K562 (cell line): ENCODE measurements at regions of chr9 and their contacts with region 1.

Region 1: DNA sequence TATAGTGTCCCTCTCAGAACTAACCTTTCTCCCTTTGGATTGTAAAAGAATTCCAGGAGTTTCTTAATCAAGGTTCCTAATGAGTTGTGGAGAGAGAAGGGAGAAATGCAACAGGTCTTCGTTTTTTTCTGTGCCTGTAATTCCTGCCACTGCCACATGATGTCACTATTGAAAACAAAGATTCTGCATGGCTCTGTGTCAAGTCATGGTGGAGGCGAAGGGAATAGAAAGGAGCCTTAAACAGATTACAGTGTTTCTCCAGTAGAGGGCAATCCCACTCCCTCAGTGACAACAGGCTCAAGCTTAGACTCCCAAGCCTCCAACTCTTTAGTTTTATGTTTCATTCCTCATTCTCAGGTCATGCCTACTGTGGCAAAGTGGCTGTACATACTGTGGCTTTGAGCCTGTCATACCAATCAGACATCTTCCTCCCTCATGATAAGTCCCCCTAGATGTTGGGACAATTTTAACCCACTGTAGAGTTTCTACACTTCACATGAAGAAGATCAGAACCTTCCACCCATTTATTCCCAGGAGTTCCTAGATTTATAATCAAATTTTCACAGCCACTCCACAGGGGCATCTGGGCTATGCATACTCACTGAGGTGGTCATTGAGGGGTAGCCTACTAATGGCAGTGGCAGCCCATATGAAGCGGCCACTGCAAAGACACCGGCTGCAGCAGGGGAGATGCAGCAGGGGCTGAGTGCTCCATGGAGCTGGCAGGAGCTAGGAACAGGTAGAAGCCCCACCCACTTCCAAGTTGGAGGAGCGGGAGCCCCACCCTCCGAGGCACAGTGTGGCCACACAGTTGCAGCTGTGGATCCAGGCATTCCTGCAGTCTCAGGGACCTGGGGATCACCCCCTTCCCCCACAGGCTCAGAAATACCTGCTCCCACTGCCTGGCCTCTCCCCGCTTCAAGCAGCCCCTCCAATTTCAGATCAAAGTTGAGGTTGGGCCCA is 97.4 kb upstream of the TRIM32 start:
- DNase-seq: peak; percentile 72 to 76 (median 73)
- ATAC-seq: peak; percentile 100
- H3K4me3 ChIP-seq: no peak overlapping the region
- H3K27ac ChIP-seq: no peak overlapping the region
- H3K4me1 ChIP-seq: no peaks in the 10 kb centered on the region
- H3K27me3 ChIP-seq: no peaks in the 10 kb centered on the region
- CTCF ChIP-seq: peak; percentile 89 to 98 (median 95)
- EP300 ChIP-seq: no peak; the same call in 1 of the 2 replicates
- POLR2A ChIP-seq: no peak
- RAD21 ChIP-seq: peak; percentile 48 to 82

Region 2: DNA sequence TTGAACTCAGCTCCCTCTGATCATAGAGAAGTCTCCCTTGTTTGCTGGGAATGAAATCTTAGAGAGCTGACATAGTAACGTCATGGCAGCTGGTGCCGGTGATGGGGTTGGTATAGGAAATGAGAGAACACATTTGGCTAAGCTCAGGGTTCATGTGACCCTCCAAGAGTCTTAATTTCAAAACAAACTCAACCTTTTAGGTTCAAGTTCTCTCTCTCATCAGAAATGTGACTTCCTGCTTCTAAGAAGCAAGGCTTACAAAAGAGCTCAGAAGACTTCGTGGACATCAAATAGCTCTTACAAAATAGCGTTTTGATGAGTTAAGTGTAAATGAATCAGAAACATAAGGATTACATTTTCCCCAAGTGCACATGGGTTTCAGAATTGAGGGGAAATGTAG is 338.8 kb before region 1 on chr9:
- CTCF ChIA-PET with region 1: no interaction called
- POLR2A ChIA-PET with region 1: no interaction called
- in situ Hi-C with region 1: no loop called
- intact Hi-C with region 1: no loop called
- DNase-seq: no peak
- ATAC-seq: no peak
- H3K4me3 ChIP-seq: no peak overlapping the region
- H3K27ac ChIP-seq: no peak overlapping the region
- H3K4me1 ChIP-seq: no peaks in the 10 kb centered on the region
- H3K27me3 ChIP-seq: no peaks in the 10 kb centered on the region
- CTCF ChIP-seq: no peak
- EP300 ChIP-seq: no peak
- POLR2A ChIP-seq: no peak
- RAD21 ChIP-seq: no peak

Region 3: GRCh38 chr9:116646661-116647512 is 57.2 kb after region 1 on chr9:
- CTCF ChIA-PET with region 1: no interaction called
- POLR2A ChIA-PET with region 1: no interaction called
- in situ Hi-C with region 1: no loop called
- intact Hi-C with region 1: loop called (anchors 1 kb)
- DNase-seq: peak in 3 of 4 experiments; percentile 9 to 40 (median 18)
- ATAC-seq: peak; percentile 88
- H3K4me3 ChIP-seq: no peak overlapping the region
- H3K27ac ChIP-seq: no peak overlapping the region
- H3K4me1 ChIP-seq: no peaks in the 10 kb centered on the region
- H3K27me3 ChIP-seq: no peaks in the 10 kb centered on the region
- CTCF ChIP-seq: peak; percentile 47 to 68 (median 58)
- EP300 ChIP-seq: no peak
- POLR2A ChIP-seq: no peak
- RAD21 ChIP-seq: peak; percentile 72 to 74

Region 4: GRCh38 chr9:116661037-116661954 is 71.6 kb after region 1 on chr9:
- CTCF ChIA-PET with region 1: interaction called, 10 read pairs
- POLR2A ChIA-PET with region 1: no interaction called
- in situ Hi-C with region 1: no loop called
- intact Hi-C with region 1: loop called (anchors 1 kb)
- DNase-seq: peak; percentile 47 to 62 (median 54)
- ATAC-seq: peak; percentile 91
- H3K4me3 ChIP-seq: no peak overlapping the region
- H3K27ac ChIP-seq: no peak overlapping the region
- H3K4me1 ChIP-seq: no peaks in the 10 kb centered on the region
- H3K27me3 ChIP-seq: no peaks in the 10 kb centered on the region
- CTCF ChIP-seq: peak; percentile 63 to 83 (median 70)
- EP300 ChIP-seq: no peak
- POLR2A ChIP-seq: no peak
- RAD21 ChIP-seq: peak; percentile 79 to 80